AG04449 (cell line): ENCODE measurements at regions of chr9 and their contacts with region 1.

Region 1: DNA sequence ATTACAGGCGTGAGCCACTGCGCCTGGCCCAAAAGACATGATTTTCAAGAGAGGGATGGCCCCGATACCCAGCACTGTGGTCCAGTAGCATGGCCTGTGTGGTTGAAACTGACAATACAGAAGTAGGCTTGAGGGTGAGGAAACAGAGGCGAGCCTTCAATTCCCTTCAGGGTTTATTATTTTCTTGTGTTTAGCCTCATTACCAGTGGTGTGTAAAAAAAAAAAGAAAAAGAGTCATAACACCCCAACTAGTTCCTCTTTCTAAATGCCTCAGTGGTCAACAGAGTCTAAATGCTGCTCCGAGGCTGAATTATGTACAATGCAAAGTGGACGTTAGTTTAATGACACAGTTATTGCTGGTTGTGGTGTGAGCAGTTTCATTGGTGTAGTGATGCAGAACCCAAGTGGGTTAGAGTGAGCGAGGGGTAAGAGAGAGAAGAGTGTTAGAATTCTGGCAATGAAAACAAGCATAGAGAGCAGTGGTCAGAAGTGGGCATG is 58.8 kb downstream of the SNX30 start:
- DNase-seq: no peak
- H3K4me3 ChIP-seq: no peak overlapping the region
- CTCF ChIP-seq: no peak

Region 2: DNA sequence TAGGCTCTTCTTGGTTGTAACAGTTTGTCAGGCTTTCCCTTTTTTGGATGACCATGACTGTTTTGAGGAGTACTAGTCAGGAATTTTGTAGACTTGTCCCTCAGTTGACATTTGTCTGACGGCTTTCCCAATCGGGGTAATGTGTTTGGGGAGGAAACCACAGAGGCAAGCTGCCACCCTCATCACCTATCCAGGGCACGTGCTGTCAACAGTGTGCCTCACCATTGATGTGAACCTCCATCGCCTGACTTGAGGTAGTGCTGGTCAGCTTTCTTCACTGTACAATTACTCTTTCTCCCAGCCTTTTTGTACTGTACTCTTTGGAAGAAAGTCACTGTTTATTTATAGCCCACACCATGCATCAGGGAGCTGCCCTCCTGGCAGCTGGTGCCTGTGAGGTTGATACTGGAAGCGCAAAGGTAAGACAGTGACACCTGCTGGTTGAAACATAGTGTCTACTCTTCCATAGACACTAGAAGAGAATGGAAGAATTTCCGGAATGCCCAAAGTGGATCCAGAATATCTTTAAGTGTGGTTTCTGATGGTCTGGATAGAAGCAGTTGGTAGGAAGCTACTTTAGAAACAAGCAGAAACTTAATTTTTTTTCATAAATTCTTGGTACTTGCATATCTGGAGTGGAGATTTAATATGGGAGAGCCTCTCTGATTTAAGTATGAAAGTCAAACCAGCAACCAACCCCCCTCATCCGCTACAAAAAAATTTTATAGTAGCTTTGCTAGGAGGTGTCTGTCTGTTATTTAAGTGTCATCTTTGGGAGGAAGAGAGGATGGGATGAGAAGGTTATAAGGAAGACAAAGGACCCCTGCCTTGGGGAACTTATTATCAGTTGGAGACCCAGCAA is 10.5 kb after region 1 on chr9:
- CTCF ChIA-PET with region 1: interaction called, 15 read pairs
- POLR2A ChIA-PET with region 1: no interaction called
- DNase-seq: peak; percentile 29
- H3K4me3 ChIP-seq: no peak overlapping the region
- CTCF ChIP-seq: peak; percentile 34